ENCODE measurements at regions of chr5 and their contacts with region 1.

Region 1: GRCh38 chr5:119063579-119064379 is 7.1 kb upstream of the DMXL1 start:
- DNase-seq: no peak
- H3K4me3 ChIP-seq: no peak overlapping the region
- H3K27ac ChIP-seq: no peak overlapping the region
- H3K4me1 ChIP-seq: no peaks in the 10 kb centered on the region
- H3K27me3 ChIP-seq: no peaks in the 10 kb centered on the region
- CTCF ChIP-seq: no peak
- EP300 ChIP-seq: no peak
- POLR2A ChIP-seq: no peak

Region 2: GRCh38 chr5:117380316-117380715 is 1683.5 kb before region 1 on chr5:
- intact Hi-C with region 1: loop called in 1 of 4 experiments (anchors 5 kb)
- DNase-seq: no peak
- H3K4me3 ChIP-seq: no peak overlapping the region
- H3K27ac ChIP-seq: no peak overlapping the region
- H3K4me1 ChIP-seq: no peaks in the 10 kb centered on the region
- H3K27me3 ChIP-seq: no peaks in the 10 kb centered on the region
- CTCF ChIP-seq: no peak
- EP300 ChIP-seq: no peak
- POLR2A ChIP-seq: no peak

Measured in ovary (tissue), 10 donors.